Heart right ventricle (tissue), 16 donors: ENCODE measurements at regions of chr20 and their contacts with region 1.

Region 1: GRCh38 chr20:60210779-60211617 is 252.8 kb downstream of the CDH26 start:
- DNase-seq: peak; percentile 57 to 69
- ATAC-seq: peak; percentile 69 to 92 (median 84)
- H3K4me3 ChIP-seq: no peak overlapping the region
- H3K27ac ChIP-seq: no peak overlapping the region
- H3K4me1 ChIP-seq: peaks cover 0 to 13% (median 0%) of the 10 kb centered on the region in 9 donors
- H3K27me3 ChIP-seq: peaks cover 0 to 20% (median 0%) of the 10 kb centered on the region in 7 donors
- CTCF ChIP-seq: peak; percentile 78 to 92 (median 88)

Region 2: DNA sequence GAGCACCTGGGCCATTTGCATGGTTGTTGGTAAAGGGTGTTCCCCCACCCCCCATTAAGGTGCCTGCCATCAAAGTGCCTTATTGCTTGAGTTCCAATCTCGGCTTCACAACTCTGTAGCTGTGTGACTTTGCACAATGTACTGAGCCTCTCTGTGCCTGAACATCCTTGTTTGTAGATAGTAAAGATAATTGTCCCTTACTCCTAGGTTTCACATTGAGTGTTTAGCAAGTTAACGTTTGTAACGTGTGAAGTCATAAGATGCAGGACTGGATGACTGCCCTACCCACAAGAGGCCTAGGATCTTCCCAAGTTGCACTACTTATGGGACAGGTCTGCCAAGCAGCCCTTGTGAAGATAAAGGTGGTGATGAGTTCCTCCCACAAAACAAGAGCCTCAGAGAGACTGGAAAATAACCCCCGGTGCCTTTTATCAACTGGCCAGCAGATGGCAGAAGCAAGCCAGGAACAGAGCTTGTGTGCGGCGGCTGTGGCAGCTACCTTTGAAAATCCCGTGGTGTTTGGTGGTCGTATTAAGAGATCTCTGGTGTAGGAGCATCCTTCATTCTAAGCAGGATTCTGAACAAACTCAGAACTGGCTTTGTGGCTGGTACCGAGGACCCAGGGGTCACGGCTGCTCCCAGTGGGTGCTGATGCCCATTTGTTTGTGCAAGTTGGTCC is 153.7 kb before region 1 on chr20:
- intact Hi-C with region 1: loop called in 6 of 10 experiments (anchors 5 to 10 kb)
- DNase-seq: peak; percentile 61
- ATAC-seq: peak; percentile 40 to 77 (median 60)
- H3K4me3 ChIP-seq: peak overlapping the region in 1 of 10 donors; percentile 50
- H3K27ac ChIP-seq: peak overlapping the region in 3 of 10 donors; percentile 5 to 90 (median 14)
- H3K4me1 ChIP-seq: peaks cover 3 to 76% (median 27%) of the 10 kb centered on the region in 9 donors
- H3K27me3 ChIP-seq: peaks cover 0 to 12% (median 0%) of the 10 kb centered on the region in 7 donors
- CTCF ChIP-seq: peak; percentile 76 to 93 (median 88)

Region 3: DNA sequence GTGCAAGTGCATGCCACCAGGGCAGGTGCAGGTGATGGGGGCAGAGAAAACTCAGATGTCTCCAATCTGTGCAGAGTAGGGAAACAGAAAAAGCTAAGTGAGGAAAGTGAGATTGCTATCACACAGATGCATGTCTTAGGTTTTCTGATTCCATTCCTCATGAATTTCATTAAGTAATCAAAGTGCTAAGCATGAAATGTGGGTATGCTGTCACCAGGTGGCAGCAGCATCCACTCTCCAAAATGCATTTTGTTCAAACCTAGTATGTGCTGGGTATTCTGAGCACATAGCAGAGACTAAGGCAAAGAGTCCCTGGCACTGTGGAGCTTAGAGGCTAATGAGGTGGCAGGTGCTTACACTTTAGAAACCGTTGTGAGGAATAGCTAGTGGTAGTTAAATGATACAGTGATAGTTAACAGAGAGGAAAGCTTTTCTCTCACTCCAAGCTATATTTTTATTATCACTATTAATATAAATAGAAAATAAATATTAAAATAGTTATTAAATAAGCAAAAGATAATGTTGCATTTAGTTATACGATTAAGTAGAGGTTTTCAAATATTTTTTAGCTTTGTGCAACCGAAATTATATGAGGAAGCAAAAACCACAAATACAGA is 73.3 kb before region 1 on chr20:
- intact Hi-C with region 1: loop called in 2 of 10 experiments (anchors 5 kb)
- DNase-seq: no peak
- ATAC-seq: peak in 1 of 8 donors; percentile 52
- H3K4me3 ChIP-seq: peak overlapping the region in 7 of 10 donors; percentile 11 to 60 (median 40)
- H3K27ac ChIP-seq: peak overlapping the region in 3 of 10 donors; percentile 36 to 71 (median 58)
- H3K4me1 ChIP-seq: peaks cover 0 to 40% (median 31%) of the 10 kb centered on the region in 9 donors
- H3K27me3 ChIP-seq: no peaks in the 10 kb centered on the region
- CTCF ChIP-seq: peak in 8 of 9 donors; percentile 37 to 68 (median 50)

Region 4: DNA sequence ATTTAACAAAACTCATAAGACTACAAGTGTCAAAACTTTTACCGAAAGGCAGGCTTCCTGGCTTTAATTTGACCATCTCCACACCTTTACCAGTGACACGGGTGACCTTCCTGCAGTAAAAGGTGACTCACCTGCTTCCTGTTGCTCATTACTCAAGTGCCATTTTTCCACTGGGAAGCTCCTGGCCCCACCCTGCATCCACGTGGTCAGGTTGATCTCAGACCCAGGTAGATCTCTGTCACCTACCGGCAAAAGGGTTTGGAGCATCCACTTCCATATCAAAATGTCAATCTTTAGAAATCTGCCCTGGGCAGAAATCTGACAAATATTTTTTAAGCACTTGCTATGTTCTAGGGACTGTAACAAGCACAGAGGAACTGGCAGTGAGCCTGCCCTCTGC is 1009.2 kb after region 1 on chr20:
- intact Hi-C with region 1: loop called in 2 of 10 experiments (anchors 5 kb)
- DNase-seq: no peak
- ATAC-seq: no peak
- H3K4me3 ChIP-seq: no peak overlapping the region
- H3K27ac ChIP-seq: no peak overlapping the region
- H3K4me1 ChIP-seq: peaks cover 0 to 6% (median 0%) of the 10 kb centered on the region in 9 donors
- H3K27me3 ChIP-seq: peaks cover 0 to 43% (median 21%) of the 10 kb centered on the region in 7 donors
- CTCF ChIP-seq: no peak

Region 5: DNA sequence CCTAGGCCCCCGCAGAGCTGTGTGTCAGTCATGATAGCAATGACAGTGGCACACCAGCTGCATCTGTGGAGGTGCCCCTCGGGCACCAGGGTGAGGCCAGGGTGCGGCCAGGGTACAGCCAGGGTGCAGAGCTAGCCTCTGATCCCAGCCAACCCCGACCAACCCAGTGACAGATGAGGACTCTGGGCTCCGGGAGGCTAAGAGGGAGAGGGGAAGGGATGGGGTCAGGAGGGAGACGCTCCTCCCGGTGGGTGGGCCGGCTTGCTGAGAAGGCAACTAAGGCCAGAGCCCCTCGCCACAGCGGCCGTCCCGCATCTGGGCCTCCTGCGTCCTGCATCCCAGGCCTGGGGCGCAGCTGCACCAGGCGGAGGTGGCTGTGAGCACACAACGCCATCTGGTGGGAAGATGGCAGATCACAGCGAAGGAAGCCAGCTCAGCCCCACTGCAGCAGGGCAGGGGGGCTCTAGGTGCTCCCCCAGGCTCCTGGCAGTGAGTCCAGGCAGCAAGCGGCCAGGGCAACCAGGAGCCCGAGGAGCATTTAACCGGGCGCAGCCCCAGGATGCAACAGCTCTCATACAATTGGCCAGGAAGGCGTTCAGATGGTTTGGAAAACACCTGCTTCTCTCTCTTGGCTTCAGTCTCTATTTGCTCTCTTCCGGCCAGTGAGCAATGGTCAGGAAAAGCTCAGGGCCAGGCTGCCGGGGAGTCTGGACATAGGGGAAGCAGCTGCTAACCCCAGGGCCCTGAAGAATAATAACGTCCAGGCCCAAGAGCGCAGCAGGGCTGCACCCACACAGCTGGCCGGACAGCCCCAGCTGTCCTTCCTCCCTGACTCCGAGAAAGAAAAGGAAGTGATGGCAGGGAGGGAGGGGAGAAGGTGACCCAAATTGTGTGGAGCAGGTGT is 1685.3 kb after region 1 on chr20:
- intact Hi-C with region 1: loop called in 3 of 10 experiments (anchors 10 kb)
- DNase-seq: peak in 1 of 2 donors; percentile 39
- ATAC-seq: peak in 6 of 8 donors; percentile 43 to 74 (median 63)
- H3K4me3 ChIP-seq: no peak overlapping the region
- H3K27ac ChIP-seq: no peak overlapping the region
- H3K4me1 ChIP-seq: peaks cover 0 to 7% (median 0%) of the 10 kb centered on the region in 9 donors
- H3K27me3 ChIP-seq: peaks cover 0 to 59% (median 26%) of the 10 kb centered on the region in 7 donors
- CTCF ChIP-seq: peak; percentile 31 to 74 (median 70)